ENCODE measurements at regions of chr2 and their contacts with region 1.

Region 1: DNA sequence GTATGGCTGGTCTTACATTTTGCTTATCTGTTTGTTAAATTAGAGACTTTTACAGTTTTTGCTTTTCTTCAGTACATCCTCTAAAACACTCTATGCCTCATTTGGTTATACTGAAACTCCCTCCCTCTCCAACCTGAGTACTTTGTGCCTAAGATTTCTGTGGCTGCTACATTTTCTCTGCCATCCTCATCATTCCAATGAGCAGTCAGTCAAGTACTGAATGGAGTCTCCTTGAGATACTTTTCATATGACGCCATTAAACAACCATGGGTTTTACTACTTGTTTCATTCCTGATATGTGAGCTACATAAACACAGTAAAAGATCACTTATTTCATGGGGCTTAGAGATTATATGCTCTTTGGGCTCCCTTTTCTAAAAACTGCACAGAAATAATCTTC is 196.7 kb upstream of the EPC2 start:
- DNase-seq: no peak
- H3K4me3 ChIP-seq: no peak overlapping the region
- H3K27ac ChIP-seq: no peak overlapping the region
- H3K4me1 ChIP-seq: no peaks in the 10 kb centered on the region
- H3K27me3 ChIP-seq: no peaks in the 10 kb centered on the region
- CTCF ChIP-seq: no peak
- POLR2A ChIP-seq: no peak

Region 2: GRCh38 chr2:148483666-148484065 is 35.8 kb after region 1 on chr2:
- intact Hi-C with region 1: no loop called
- DNase-seq: no peak
- H3K4me3 ChIP-seq: no peak overlapping the region
- H3K27ac ChIP-seq: no peak overlapping the region
- H3K4me1 ChIP-seq: no peaks in the 10 kb centered on the region
- H3K27me3 ChIP-seq: no peaks in the 10 kb centered on the region
- CTCF ChIP-seq: no peak
- POLR2A ChIP-seq: no peak

Region 3: GRCh38 chr2:148874868-148875341 is 427.0 kb after region 1 on chr2 and contains the start of gene KIF5C:
- intact Hi-C with region 1: no loop called
- DNase-seq: peak; percentile 70 to 78
- H3K4me3 ChIP-seq: peak within 1 kb of the TSS; percentile 24 to 84 (median 58)
- H3K27ac ChIP-seq: no peak within 1 kb of the TSS
- H3K4me1 ChIP-seq: peaks cover 0 to 3% of the 10 kb centered on the region in 2 donors
- H3K27me3 ChIP-seq: peaks cover 0 to 17% of the 10 kb centered on the region in 2 donors
- CTCF ChIP-seq: no peak
- POLR2A ChIP-seq: no peak
- total RNA-seq, gene KIF5C: 2.7 to 13.3 (median 6.2) TPM

Region 4: GRCh38 chr2:149000158-149000938 is 552.5 kb after region 1 on chr2:
- intact Hi-C with region 1: loop called (anchors 5 kb)
- DNase-seq: no peak
- H3K4me3 ChIP-seq: no peak overlapping the region
- H3K27ac ChIP-seq: no peak overlapping the region
- H3K4me1 ChIP-seq: peaks cover 0 to 12% of the 10 kb centered on the region in 2 donors
- H3K27me3 ChIP-seq: no peaks in the 10 kb centered on the region
- CTCF ChIP-seq: no peak
- POLR2A ChIP-seq: no peak